Thyroid gland (tissue), 4 donors: ENCODE measurements at regions of chr6 and their contacts with region 1.

Region 1: DNA sequence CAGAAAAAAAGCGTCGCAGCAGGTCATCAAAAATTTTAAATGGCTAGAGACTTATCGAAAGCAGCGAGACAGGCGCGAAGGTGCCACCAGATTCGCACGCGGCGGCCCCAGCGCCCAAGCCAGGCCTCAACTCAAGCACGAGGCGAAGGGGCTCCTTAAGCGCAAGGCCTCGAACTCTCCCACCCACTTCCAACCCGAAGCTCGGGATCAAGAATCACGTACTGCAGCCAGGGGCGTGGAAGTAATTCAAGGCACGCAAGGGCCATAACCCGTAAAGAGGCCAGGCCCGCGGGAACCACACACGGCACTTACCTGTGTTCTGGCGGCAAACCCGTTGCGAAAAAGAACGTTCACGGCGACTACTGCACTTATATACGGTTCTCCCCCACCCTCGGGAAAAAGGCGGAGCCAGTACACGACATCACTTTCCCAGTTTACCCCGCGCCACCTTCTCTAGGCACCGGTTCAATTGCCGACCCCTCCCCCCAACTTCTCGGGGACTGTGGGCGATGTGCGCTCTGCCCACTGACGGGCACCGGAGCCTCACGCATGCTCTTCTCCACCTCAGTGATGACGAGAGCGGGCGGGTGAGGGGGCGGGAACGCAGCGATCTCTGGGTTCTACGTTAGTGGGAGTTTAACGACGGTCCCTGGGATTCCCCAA is at the start of gene EEF1A1:
- DNase-seq: peak; percentile 100
- H3K4me3 ChIP-seq: peak within 1 kb of the TSS; percentile 85 to 97 (median 92)
- H3K27ac ChIP-seq: peak within 1 kb of the TSS; percentile 98 to 100 (median 99)
- H3K4me1 ChIP-seq: peaks cover 23 to 39% of the 10 kb centered on the region in 2 donors
- H3K27me3 ChIP-seq: no peaks in the 10 kb centered on the region
- CTCF ChIP-seq: peak in 2 of 6 experiments; percentile 17 to 27
- POLR2A ChIP-seq: peak; percentile 98 to 99
- total RNA-seq, gene EEF1A1: 9,141 to 11,705 (median 10,644) TPM

Region 2: DNA sequence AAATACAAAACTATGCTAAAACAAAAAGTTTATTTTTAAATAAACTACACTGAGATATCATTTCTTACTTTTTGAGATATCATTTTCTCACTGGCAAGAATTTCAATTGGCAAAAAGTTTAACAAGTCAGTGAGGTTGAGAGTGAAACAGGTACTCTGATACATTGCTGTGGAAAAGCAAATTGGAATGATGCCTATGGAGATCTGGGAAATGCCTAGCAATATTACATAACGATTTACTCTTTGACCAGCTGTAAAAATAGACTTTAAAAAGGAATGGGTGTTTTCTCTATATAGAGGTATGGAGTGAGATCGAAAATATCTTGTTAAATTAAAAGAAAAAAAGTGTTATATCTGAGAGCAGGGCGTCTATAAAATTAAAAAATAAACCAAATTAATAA is 85.6 kb before region 1 on chr6:
- intact Hi-C with region 1: no loop called
- DNase-seq: no peak
- H3K4me3 ChIP-seq: no peak overlapping the region
- H3K27ac ChIP-seq: no peak overlapping the region
- H3K4me1 ChIP-seq: no peaks in the 10 kb centered on the region
- H3K27me3 ChIP-seq: no peaks in the 10 kb centered on the region
- CTCF ChIP-seq: no peak
- POLR2A ChIP-seq: no peak

Region 3: GRCh38 chr6:73579851-73580246 is 59.0 kb after region 1 on chr6:
- intact Hi-C with region 1: loop called (anchors 10 kb)
- DNase-seq: peak in 1 of 2 donors; percentile 39
- H3K4me3 ChIP-seq: no peak overlapping the region
- H3K27ac ChIP-seq: peak overlapping the region; percentile 95 to 99 (median 95)
- H3K4me1 ChIP-seq: peaks cover 21 to 25% of the 10 kb centered on the region in 2 donors
- H3K27me3 ChIP-seq: no peaks in the 10 kb centered on the region
- CTCF ChIP-seq: no peak
- POLR2A ChIP-seq: no peak

Region 4: DNA sequence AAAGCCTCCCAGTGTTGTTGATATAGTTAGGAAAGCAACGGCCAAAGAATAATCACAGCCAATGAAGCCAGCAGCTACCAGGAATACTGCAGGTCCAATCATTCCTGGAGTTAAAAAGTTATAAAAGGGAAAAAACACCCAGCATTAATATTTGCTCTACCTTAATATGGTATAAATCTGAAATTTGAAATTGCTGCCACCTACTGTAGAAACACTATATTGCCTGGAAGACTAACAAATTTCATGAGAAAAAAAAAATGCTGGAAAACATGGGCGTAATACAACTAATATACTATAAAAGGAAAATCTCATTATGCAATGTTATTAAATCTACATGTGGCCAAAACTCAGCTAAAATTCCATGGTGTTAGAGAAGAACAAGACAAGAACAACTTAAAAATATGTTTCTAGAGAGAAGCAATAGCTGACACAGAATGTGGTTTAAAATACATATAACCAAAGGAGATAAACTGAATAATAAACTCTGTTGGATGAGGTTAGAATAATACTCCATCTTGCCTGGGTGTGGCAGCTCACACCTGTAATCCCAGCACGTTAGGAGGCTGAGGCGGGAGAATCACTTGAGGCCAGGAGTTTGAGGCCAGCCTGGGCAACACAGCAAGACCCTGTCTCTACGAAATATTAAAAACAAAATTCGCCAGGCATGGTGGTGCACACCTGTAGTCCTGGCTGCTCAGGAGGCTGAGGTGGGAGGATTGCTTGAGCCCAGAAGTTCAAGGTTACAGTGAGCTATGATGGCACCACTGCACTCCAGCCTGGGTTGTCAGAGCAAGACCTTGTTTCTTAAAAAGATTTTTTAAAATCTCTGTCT is 89.8 kb after region 1 on chr6:
- intact Hi-C with region 1: loop called (anchors 5 kb)
- DNase-seq: no peak
- H3K4me3 ChIP-seq: no peak overlapping the region
- H3K27ac ChIP-seq: no peak overlapping the region
- H3K4me1 ChIP-seq: no peaks in the 10 kb centered on the region
- H3K27me3 ChIP-seq: no peaks in the 10 kb centered on the region
- CTCF ChIP-seq: peak in 5 of 6 experiments; percentile 26 to 68 (median 54)
- POLR2A ChIP-seq: no peak

Region 5: DNA sequence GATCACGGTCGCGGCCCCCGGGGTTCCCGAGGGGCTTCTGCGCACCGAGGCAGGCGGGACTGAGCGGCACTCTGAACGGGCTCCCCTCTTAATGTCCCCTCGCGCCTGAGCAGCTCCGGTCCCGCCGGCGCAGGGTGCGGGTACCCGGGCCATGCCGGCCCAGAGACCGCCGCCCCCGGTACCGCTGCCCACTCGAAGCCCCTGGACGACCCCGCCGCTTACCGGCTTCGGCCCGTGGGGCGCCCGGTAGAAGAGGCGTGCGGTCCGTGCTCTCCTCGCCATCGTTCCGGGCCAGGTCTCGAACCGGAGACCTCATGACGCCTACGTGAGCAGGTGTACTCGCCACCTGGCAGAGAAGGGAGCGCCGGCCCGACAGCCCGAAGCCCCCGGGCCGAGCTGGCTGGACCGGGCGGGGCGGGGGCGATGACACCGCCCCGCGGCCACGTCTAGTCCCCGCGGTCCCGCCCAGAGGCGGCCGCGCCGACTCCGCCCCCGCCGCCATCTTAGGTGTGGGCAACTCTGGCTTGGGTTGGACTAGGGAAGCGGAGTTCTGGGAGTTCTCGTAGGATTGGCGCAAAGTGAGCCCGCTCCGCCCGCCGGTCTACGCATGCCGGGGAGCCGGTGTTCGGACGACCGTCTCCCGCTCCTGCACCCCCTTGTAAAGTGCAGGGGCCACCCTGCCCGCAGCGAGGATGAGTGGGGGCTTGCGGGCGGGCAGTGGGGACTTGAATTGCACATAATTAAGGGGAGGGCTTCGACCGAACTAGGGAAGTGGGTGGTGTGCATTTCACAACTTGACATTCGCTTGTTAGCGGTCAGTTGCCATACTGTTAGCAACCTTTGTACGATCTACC is 133.0 kb after region 1 on chr6 and contains the start of gene SLC17A5:
- intact Hi-C with region 1: loop called (anchors 5 kb)
- DNase-seq: peak; percentile 97
- H3K4me3 ChIP-seq: peak within 1 kb of the TSS; percentile 98 to 99 (median 98)
- H3K27ac ChIP-seq: peak within 1 kb of the TSS; percentile 92 to 98 (median 98)
- H3K4me1 ChIP-seq: peaks cover 20 to 38% of the 10 kb centered on the region in 2 donors
- H3K27me3 ChIP-seq: no peaks in the 10 kb centered on the region
- CTCF ChIP-seq: no peak
- POLR2A ChIP-seq: peak; percentile 66 to 88
- total RNA-seq, gene SLC17A5: 96.3 to 184 (median 159) TPM